ENCODE measurements at regions of chr6 and their contacts with region 1.

Region 1: GRCh38 chr6:124683507-124683906 is 278.7 kb upstream of the RNF217 start:
- DNase-seq: no peak
- ATAC-seq: peak; percentile 49
- H3K4me3 ChIP-seq: no peak overlapping the region
- H3K27ac ChIP-seq: no peak overlapping the region
- H3K4me1 ChIP-seq: no peaks in the 10 kb centered on the region
- H3K27me3 ChIP-seq: no peaks in the 10 kb centered on the region
- CTCF ChIP-seq: 0 out of 2 replicates have a peak, but pooled peaks have one; percentile 11
- EP300 ChIP-seq: no peak
- POLR2A ChIP-seq: no peak
- RAD21 ChIP-seq: no peak

Region 2: GRCh38 chr6:124854338-124854922 is 170.9 kb after region 1 on chr6:
- CTCF ChIA-PET with region 1: no interaction called
- POLR2A ChIA-PET with region 1: no interaction called
- in situ Hi-C with region 1: no loop called
- intact Hi-C with region 1: loop called (anchors 2 kb)
- DNase-seq: no peak
- ATAC-seq: no peak
- H3K4me3 ChIP-seq: no peak overlapping the region
- H3K27ac ChIP-seq: no peak overlapping the region
- H3K4me1 ChIP-seq: no peaks in the 10 kb centered on the region
- H3K27me3 ChIP-seq: no peaks in the 10 kb centered on the region; a peak in 1 of 5 replicates
- CTCF ChIP-seq: no peak
- EP300 ChIP-seq: no peak
- POLR2A ChIP-seq: no peak
- RAD21 ChIP-seq: no peak

Region 3: GRCh38 chr6:126063512-126064146 is 1380.1 kb after region 1 on chr6:
- CTCF ChIA-PET with region 1: no interaction called
- POLR2A ChIA-PET with region 1: no interaction called
- in situ Hi-C with region 1: no loop called
- intact Hi-C with region 1: no loop called
- DNase-seq: no peak
- ATAC-seq: no peak
- H3K4me3 ChIP-seq: no peak overlapping the region
- H3K27ac ChIP-seq: no peak overlapping the region
- H3K4me1 ChIP-seq: no peaks in the 10 kb centered on the region; the same call in 1 of the 2 replicates
- H3K27me3 ChIP-seq: no peaks in the 10 kb centered on the region
- CTCF ChIP-seq: no peak
- EP300 ChIP-seq: no peak
- POLR2A ChIP-seq: no peak
- RAD21 ChIP-seq: no peak